ENCODE measurements at regions of chr11 and their contacts with region 1.

Region 1: DNA sequence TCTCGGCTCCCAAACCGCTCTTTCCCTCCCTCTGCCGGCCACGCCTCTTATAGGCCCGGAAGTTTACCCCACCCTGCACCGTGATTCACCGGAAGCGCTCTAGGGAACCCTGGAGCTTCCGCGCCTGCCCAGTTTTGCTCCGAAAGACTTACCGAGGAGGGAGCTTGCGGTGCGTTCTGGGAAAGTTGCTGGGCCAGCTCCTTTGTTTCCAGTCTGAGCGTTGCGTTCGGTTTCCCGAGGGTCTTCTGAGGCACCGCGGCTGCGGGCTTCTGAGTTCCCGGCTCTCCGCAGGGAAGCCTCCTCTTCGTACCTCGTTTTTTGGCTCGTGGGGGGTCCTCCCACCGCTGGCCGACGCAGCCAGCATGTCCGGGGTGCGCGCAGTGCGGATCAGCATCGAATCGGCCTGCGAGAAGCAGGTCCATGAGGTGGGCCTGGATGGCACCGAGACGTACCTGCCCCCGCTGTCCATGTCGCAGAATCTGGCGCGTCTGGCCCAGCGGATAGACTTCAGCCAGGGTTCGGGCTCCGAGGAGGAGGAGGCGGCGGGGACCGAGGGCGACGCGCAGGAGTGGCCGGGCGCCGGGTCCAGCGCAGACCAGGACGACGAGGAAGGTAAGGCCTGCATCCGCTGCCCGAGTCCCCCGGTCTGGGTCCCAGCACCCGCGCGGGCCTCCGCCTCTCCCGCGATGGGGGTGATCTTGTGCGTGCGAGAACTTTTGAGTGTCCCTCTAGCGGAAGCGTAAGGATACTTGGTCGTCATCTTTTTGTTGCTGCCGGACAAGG is at the start of gene MED17:
- DNase-seq: peak; percentile 92
- ATAC-seq: peak; percentile 96
- H3K4me3 ChIP-seq: peak within 1 kb of the TSS; percentile 91
- H3K27ac ChIP-seq: peak within 1 kb of the TSS; percentile 94
- H3K4me1 ChIP-seq: peaks cover 4% of the 10 kb centered on the region; the same call in 1 of the 2 replicates
- H3K27me3 ChIP-seq: no peaks in the 10 kb centered on the region
- CTCF ChIP-seq: peak; percentile 43
- POLR2A ChIP-seq: peak; percentile 84; the same call in 1 of the 2 replicates
- RAD21 ChIP-seq: peak; percentile 4; the same call in 1 of the 2 replicates
- total RNA-seq, gene MED17: 23.3 and 34.7 TPM in 2 replicates

Region 2: DNA sequence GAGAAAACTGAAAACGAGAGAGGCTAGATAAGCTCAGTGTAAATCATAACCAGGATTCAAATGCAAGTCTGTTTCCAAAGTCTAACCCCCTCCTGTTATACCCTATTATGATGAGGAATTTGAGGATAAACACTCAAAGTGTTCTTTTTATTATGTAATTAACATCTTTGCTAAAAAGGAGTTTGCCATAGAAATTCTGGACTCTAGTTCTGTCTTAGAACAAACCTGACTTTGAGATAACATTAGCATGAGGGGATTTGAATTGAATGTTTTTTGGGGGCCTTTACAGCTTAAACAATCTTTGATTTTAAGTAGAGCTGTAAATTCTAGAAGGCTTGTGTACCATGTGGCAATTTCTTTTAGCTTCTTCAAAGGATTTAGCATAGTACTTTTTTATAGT is 33.3 kb before region 1 on chr11:
- CTCF ChIA-PET with region 1: no interaction called
- POLR2A ChIA-PET with region 1: interaction called, 23 read pairs
- dilution Hi-C with region 1: no loop called
- in situ Hi-C with region 1: no loop called
- intact Hi-C with region 1: no loop called
- DNase-seq: no peak
- ATAC-seq: no peak
- H3K4me3 ChIP-seq: no peak overlapping the region
- H3K27ac ChIP-seq: no peak overlapping the region
- H3K4me1 ChIP-seq: no peaks in the 10 kb centered on the region
- H3K27me3 ChIP-seq: no peaks in the 10 kb centered on the region
- CTCF ChIP-seq: no peak
- POLR2A ChIP-seq: no peak
- RAD21 ChIP-seq: no peak

Region 3: DNA sequence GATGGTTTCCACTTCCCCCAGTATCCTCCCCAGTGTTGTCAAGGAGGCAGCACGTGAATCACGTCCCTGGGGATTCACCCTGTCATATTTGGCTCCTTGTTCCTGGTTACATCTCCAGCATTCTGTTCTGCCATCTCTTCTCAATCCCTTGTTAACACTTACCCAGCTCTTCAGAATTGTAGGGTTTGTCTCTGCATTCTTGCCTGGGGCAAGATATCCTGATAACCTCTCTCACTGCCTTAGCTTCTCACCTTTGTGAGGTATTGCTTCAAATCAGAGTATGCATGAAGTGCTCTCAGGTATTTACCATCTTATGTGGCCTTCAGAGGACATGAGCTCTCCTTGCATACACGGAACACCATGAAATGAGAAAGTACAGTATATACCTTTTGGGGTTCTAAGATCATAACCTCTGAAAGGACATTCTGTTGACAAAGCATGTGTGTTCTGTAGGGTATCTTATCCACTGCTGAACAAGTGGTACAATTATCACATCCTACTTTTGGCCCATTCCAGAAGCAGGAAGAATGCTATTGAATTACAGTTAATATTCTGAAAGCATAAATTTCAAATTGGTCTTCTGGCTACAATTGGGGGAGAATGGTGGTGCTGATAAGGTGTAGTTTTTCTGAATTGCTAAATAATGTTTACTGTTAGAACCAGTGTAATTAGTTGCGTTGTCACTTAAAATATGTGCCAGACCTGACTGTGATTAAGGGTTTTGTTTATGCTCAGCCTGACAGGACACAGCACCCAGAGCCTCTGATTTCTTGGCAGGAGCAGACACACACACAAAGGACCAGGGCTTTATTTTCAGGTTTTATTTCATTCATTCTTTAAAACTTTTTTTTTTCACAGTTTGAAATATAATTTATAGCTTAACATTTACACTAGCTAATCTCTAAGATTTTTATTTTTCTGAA is 33.3 kb after region 1 on chr11:
- CTCF ChIA-PET with region 1: no interaction called
- POLR2A ChIA-PET with region 1: no interaction called
- dilution Hi-C with region 1: no loop called
- in situ Hi-C with region 1: no loop called
- intact Hi-C with region 1: no loop called
- DNase-seq: no peak
- ATAC-seq: no peak
- H3K4me3 ChIP-seq: no peak overlapping the region
- H3K27ac ChIP-seq: no peak overlapping the region
- H3K4me1 ChIP-seq: no peaks in the 10 kb centered on the region
- H3K27me3 ChIP-seq: no peaks in the 10 kb centered on the region
- CTCF ChIP-seq: no peak
- POLR2A ChIP-seq: no peak
- RAD21 ChIP-seq: no peak

Measured in IMR-90 (cell line).